H1 (cell line): ENCODE measurements at regions of chr18 and their contacts with region 1.

Region 1: DNA sequence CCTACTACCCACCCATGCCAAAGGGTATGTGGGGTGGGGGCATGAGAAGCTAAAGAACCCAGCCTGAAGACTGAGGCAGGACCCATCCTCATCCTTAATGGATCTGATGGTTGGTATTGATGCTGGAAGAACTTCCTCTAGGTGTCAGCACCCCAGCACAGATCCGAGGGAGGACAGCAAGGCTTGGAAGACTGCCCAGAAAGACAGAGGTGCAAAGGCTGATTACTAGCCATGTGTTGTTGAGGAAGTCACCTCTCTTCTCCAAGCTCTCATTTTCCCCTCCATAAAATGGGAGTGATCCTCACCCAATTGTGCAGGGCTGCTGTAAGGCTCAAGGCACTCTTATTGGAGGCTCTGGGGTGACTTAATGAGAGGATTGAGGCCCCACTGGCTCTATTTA is 256.5 kb downstream of the CELF4 start:
- DNase-seq: no peak
- H3K4me3 ChIP-seq: no peak overlapping the region
- H3K27ac ChIP-seq: no peak overlapping the region
- H3K4me1 ChIP-seq: peaks cover 0 to 6% (median 0%) of the 10 kb centered on the region in 4 experiments; a peak in 2 of 7 replicates
- H3K27me3 ChIP-seq: no peaks in the 10 kb centered on the region
- CTCF ChIP-seq: peak in 1 of 3 experiments; percentile 9; a peak in 1 of 4 replicates
- EP300 ChIP-seq: no peak
- POLR2A ChIP-seq: no peak
- RAD21 ChIP-seq: 0 out of 4 replicates have a peak, but pooled peaks of 1 of the 2 experiments have one; percentile 3

Region 2: DNA sequence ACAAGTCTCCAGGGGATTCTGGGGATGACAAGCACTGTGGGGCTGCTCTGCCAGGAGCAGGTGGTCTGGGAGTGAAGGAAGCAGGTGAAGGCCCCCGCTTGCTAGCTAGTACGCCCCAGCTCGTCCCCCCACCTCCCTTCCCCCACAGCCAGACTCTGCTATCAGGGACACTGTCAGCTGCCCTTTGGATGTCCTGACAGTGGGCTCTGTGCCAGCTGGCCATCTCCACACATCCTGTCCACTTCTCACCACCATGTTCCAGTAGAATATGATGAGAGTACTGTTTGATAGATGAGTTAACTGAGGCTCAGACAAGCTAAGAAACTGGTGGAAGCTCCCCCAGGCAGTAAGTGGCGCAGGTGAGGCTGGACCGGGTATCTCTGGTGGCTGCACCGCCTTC is 19.6 kb before region 1 on chr18:
- CTCF ChIA-PET with region 1: interaction called, 26 read pairs
- POLR2A ChIA-PET with region 1: no interaction called
- DNase-seq: no peak
- H3K4me3 ChIP-seq: no peak overlapping the region
- H3K27ac ChIP-seq: no peak overlapping the region
- H3K4me1 ChIP-seq: no peaks in the 10 kb centered on the region
- H3K27me3 ChIP-seq: no peaks in the 10 kb centered on the region; a peak in 1 of 7 replicates
- CTCF ChIP-seq: no peak
- EP300 ChIP-seq: no peak
- POLR2A ChIP-seq: no peak
- RAD21 ChIP-seq: no peak